ENCODE measurements at regions of chr17 and their contacts with region 1.

Region 1: GRCh38 chr17:20992987-20993862 is 49.6 kb downstream of the USP22 start:
- DNase-seq: peak; percentile 51
- ATAC-seq: peak; percentile 81
- H3K4me3 ChIP-seq: no peak overlapping the region
- H3K27ac ChIP-seq: no peak overlapping the region; the same call in 1 of the 2 replicates
- H3K4me1 ChIP-seq: peaks cover 6 to 9% of the 10 kb centered on the region in 2 experiments; a peak in 3 of 4 replicates
- H3K27me3 ChIP-seq: no peaks in the 10 kb centered on the region
- CTCF ChIP-seq: peak; percentile 73 to 97 (median 94)
- POLR2A ChIP-seq: no peak
- RAD21 ChIP-seq: peak; percentile 73

Region 2: DNA sequence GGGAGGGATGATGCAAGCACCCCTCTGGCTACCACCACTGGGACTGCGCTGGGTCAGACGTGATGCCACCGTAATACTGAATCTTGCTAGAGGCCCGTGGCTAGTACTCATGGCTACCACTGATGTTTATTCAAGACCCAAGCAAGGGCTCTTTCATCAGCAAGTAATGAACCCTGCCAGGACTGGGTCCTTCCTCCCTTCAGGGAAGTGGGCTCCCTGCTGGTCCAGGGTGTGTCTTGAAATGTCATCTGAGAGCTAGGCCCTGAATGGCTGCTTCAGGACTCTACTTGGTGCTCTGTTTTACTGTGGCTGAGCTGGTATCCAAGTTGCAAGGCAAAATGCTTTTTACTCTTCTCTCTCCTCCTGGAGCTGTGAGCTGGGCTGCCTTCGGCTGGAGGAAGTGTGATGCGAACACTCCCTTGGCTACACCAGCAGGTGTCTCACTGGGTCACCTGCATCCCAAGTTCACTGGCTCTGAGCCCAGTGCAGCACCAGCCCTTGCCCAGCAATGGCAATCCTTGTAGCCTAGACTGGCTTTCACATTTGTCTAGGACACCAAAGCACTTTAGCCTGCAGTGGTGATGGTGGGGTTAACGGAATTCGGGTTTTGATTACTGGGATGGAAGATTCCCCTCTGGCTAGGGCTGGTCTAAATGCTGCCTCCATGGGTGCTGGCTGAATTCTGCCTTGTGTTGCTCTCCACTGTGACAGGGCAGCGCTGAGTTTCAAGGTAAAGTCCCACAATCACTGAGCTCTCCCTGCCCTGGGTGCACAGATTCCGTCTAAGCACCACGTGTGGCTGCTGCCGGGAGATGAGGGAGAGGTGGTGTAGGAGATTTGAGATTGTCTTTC is 49.0 kb before region 1 on chr17:
- CTCF ChIA-PET with region 1: interaction called, 18 read pairs
- POLR2A ChIA-PET with region 1: interaction called, 4 read pairs
- RAD21 ChIA-PET with region 1: no interaction called
- intact Hi-C with region 1: loop called (anchors 5 kb)
- DNase-seq: peak; percentile 36
- ATAC-seq: peak; percentile 99
- H3K4me3 ChIP-seq: no peak overlapping the region
- H3K27ac ChIP-seq: no peak overlapping the region
- H3K4me1 ChIP-seq: peaks cover 6% of the 10 kb centered on the region in 2 experiments; a peak in 2 of 4 replicates
- H3K27me3 ChIP-seq: peaks cover 5% of the 10 kb centered on the region; the same call in 1 of the 2 replicates
- CTCF ChIP-seq: peak; percentile 50 to 78 (median 72); a peak in 5 of 6 replicates
- POLR2A ChIP-seq: no peak
- RAD21 ChIP-seq: peak; percentile 66

Region 3: DNA sequence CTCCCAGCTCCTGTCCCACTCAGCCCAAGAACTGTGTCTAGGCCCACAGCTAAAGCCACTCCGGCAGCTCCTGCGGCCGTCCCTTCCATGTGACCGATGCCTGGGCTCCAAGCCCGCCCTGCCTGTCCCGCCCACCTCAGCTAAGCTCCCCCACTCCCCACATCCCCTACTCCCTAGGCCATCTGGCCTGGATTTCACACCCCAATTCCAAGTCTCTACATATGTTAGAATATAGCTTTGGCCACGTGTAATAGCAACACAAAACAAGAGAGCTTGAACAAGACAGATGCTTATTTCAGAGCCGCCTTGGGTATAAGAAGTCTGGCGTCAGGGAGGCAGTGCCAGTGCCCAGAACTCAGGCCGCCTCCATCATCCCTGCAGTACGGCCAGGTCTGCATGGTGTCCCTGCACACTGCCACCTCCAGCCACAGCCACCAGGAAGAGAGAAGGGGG is 79.5 kb after region 1 on chr17:
- CTCF ChIA-PET with region 1: no interaction called
- POLR2A ChIA-PET with region 1: no interaction called
- RAD21 ChIA-PET with region 1: no interaction called
- intact Hi-C with region 1: no loop called
- DNase-seq: no peak
- ATAC-seq: no peak
- H3K4me3 ChIP-seq: no peak overlapping the region
- H3K27ac ChIP-seq: no peak overlapping the region
- H3K4me1 ChIP-seq: no peaks in the 10 kb centered on the region
- H3K27me3 ChIP-seq: no peaks in the 10 kb centered on the region
- CTCF ChIP-seq: no peak
- POLR2A ChIP-seq: no peak
- RAD21 ChIP-seq: no peak

Measured in HCT116 (cell line).